H1 (cell line): ENCODE measurements at regions of chr11 and their contacts with region 1.

Region 1: DNA sequence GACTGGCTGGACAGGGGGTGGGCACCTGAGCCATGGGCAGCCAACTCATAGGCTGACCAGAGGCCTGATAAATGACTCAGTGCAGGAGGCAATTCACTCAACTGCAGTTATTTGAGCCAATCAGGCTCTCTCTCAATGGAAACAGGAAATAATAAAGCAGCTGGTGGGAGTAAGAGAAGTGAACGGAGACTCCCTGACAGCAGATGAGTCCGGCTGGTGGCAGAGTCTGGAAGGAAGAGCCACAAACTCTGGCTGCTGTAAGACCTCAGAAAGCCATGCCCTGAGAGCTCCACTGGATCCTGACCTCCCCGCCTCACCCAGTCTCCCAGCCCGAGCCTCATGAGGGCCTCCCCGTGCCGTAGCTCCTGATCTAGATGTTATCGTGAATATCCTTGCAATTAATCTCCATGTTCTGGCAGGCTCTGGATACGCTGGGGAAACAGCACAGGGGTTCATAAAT is 69.8 kb downstream of the TRIM29 start:
- DNase-seq: peak in 1 of 2 experiments; percentile 29
- H3K4me3 ChIP-seq: no peak overlapping the region
- H3K27ac ChIP-seq: no peak overlapping the region
- H3K4me1 ChIP-seq: peaks cover 0 to 5% (median 0%) of the 10 kb centered on the region in 4 experiments; a peak in 2 of 7 replicates
- H3K27me3 ChIP-seq: 0 out of 7 replicates have a peak, but pooled peaks cover 0 to 2% (median 0%) of the 10 kb centered on the region in 4 experiments
- CTCF ChIP-seq: no peak
- EP300 ChIP-seq: no peak
- POLR2A ChIP-seq: no peak
- RAD21 ChIP-seq: no peak

Region 2: GRCh38 chr11:119942583-119943297 is 125.4 kb before region 1 on chr11:
- CTCF ChIA-PET with region 1: no interaction called
- POLR2A ChIA-PET with region 1: no interaction called
- DNase-seq: no peak
- H3K4me3 ChIP-seq: no peak overlapping the region
- H3K27ac ChIP-seq: no peak overlapping the region
- H3K4me1 ChIP-seq: peaks cover 2 to 6% (median 3%) of the 10 kb centered on the region in 4 experiments; a peak in 4 of 7 replicates
- H3K27me3 ChIP-seq: no peaks in the 10 kb centered on the region; a peak in 1 of 7 replicates
- CTCF ChIP-seq: no peak
- EP300 ChIP-seq: no peak
- POLR2A ChIP-seq: no peak
- RAD21 ChIP-seq: no peak

Region 3: GRCh38 chr11:120079750-120080490 is 11.8 kb after region 1 on chr11:
- CTCF ChIA-PET with region 1: interaction called, 38 read pairs
- POLR2A ChIA-PET with region 1: interaction called, 3 read pairs
- DNase-seq: peak in 1 of 2 experiments; percentile 82
- H3K4me3 ChIP-seq: no peak overlapping the region
- H3K27ac ChIP-seq: no peak overlapping the region
- H3K4me1 ChIP-seq: no peaks in the 10 kb centered on the region
- H3K27me3 ChIP-seq: no peaks in the 10 kb centered on the region; a peak in 2 of 7 replicates
- CTCF ChIP-seq: peak; percentile 74 to 82 (median 76)
- EP300 ChIP-seq: no peak
- POLR2A ChIP-seq: no peak
- RAD21 ChIP-seq: peak; percentile 55 to 72

Region 4: DNA sequence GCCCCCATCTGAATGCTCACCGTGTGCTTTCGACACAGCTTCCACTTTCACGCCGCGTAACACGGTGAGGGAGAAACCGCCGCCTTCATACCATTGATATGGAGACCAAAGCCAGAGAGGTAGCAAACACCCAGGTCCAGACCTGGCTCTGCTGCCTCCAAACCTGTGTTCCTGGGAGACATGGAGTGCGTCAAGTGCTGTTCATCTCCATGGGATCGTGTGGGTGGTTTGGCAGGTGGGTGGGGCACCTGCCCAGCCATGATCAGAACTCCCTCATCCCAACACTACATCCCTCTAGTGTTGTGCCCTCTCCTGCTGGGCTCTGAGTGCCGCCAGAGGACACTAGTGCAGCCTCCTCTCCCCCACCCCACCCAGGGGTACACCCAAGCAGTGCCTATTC is 31.6 kb after region 1 on chr11:
- CTCF ChIA-PET with region 1: no interaction called
- POLR2A ChIA-PET with region 1: no interaction called
- DNase-seq: no peak
- H3K4me3 ChIP-seq: no peak overlapping the region
- H3K27ac ChIP-seq: no peak overlapping the region
- H3K4me1 ChIP-seq: peaks cover 0 to 12% (median 7%) of the 10 kb centered on the region in 4 experiments; a peak in 4 of 7 replicates
- H3K27me3 ChIP-seq: peaks cover 0 to 34% (median 20%) of the 10 kb centered on the region in 4 experiments; a peak in 5 of 7 replicates
- CTCF ChIP-seq: no peak
- EP300 ChIP-seq: no peak
- POLR2A ChIP-seq: no peak
- RAD21 ChIP-seq: no peak

Region 5: GRCh38 chr11:120115272-120116000 is 47.3 kb after region 1 on chr11:
- CTCF ChIA-PET with region 1: no interaction called
- POLR2A ChIA-PET with region 1: no interaction called
- DNase-seq: peak in 1 of 2 experiments; percentile 58
- H3K4me3 ChIP-seq: no peak overlapping the region
- H3K27ac ChIP-seq: no peak overlapping the region
- H3K4me1 ChIP-seq: peaks cover 0 to 5% (median 2%) of the 10 kb centered on the region in 4 experiments; a peak in 4 of 7 replicates
- H3K27me3 ChIP-seq: no peaks in the 10 kb centered on the region; a peak in 2 of 7 replicates
- CTCF ChIP-seq: peak; percentile 15 to 32 (median 30)
- EP300 ChIP-seq: no peak
- POLR2A ChIP-seq: no peak
- RAD21 ChIP-seq: 0 out of 4 replicates have a peak, but pooled peaks of 1 of the 2 experiments have one; percentile 16